ENCODE measurements at regions of chr1 and their contacts with region 1.

Region 1: DNA sequence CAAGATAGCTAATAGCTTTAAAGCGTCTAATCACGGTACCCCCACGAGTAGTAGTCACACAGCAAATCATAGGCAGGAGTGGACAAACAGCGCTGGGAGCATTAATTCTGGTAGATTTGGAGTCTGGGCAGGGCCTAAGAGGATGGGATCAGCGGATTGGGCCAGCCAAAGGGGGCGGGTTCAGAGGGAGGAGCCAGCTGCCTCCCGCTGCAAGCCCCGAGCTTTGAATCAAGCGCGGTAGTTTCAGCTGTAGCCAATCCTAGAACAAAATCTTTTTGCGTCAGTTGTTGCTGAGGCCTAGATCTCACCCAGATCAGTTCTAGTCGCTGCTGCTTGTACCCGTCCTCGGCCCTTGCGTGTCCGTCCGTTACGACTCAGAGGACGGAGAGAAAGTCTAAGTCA is 576 bp upstream of the NASP start:
- DNase-seq: peak; percentile 96
- H3K4me3 Mint-ChIP-seq: peak overlapping the region; percentile 99
- H3K27ac Mint-ChIP-seq: peak overlapping the region; percentile 98
- H3K4me1 Mint-ChIP-seq: peaks cover 25% of the 10 kb centered on the region
- H3K27me3 Mint-ChIP-seq: no peaks in the 10 kb centered on the region

Region 2: GRCh38 chr1:45303582-45304310 is 279.5 kb before region 1 on chr1:
- CTCF ChIA-PET with region 1: interaction called, 3 read pairs
- POLR2A ChIA-PET with region 1: no interaction called
- intact Hi-C with region 1: loop called (anchors 1 kb)
- DNase-seq: peak; percentile 100
- H3K4me3 Mint-ChIP-seq: peak overlapping the region; percentile 89
- H3K27ac Mint-ChIP-seq: peak overlapping the region; percentile 96
- H3K4me1 Mint-ChIP-seq: peaks cover 29% of the 10 kb centered on the region
- H3K27me3 Mint-ChIP-seq: no peaks in the 10 kb centered on the region

Region 3: DNA sequence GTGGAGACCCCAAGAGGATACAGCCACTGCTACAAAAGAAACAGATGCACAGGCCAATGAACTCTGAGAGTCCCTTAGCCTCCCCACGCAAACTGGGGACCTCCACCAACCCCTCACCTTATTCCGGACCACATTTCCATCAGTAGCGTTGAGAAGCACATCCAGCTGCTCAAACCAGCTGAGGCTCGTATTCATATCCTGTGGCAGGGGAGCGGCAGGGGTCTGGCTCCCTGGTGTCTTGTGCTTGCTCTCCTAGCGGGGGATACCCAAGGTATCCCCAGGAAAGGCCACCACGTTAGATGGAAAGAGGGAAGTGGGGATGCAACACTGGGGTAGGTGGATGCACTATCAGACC is 83.9 kb before region 1 on chr1:
- CTCF ChIA-PET with region 1: interaction called, 5 read pairs
- POLR2A ChIA-PET with region 1: interaction called, 8 read pairs
- intact Hi-C with region 1: loop called (anchors 1 kb)
- DNase-seq: peak; percentile 39
- H3K4me3 Mint-ChIP-seq: peak overlapping the region; percentile 95
- H3K27ac Mint-ChIP-seq: peak overlapping the region; percentile 83
- H3K4me1 Mint-ChIP-seq: peaks cover 30% of the 10 kb centered on the region
- H3K27me3 Mint-ChIP-seq: no peaks in the 10 kb centered on the region

Region 4: GRCh38 chr1:45543581-45544417 is 39.5 kb before region 1 on chr1:
- CTCF ChIA-PET with region 1: no interaction called
- POLR2A ChIA-PET with region 1: interaction called, 3 read pairs
- intact Hi-C with region 1: loop called (anchors 5 kb)
- DNase-seq: peak; percentile 87
- H3K4me3 Mint-ChIP-seq: peak overlapping the region; percentile 10
- H3K27ac Mint-ChIP-seq: peak overlapping the region; percentile 60
- H3K4me1 Mint-ChIP-seq: peaks cover 26% of the 10 kb centered on the region
- H3K27me3 Mint-ChIP-seq: no peaks in the 10 kb centered on the region

Region 5: DNA sequence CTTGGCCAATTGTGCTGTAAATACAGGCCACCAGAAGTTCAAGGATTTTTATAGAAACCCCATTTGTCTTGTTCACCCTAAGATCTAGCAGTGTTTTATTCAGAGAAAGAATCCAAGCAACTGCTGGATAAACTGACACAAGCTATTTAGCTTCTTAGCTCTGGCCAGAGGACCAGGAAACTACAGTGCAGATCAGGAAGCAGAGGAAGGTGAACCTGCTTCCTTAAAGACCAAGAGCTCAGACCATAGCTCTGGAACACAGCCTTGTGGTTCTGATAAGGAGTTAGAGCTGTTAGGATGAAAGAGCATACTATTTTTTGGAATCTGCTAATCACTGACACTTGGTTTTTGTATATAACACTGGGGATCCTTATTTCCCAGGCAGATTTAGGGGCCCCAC is 45.8 kb after region 1 on chr1:
- CTCF ChIA-PET with region 1: no interaction called
- POLR2A ChIA-PET with region 1: no interaction called
- intact Hi-C with region 1: no loop called
- DNase-seq: no peak
- H3K4me3 Mint-ChIP-seq: no peak overlapping the region
- H3K27ac Mint-ChIP-seq: no peak overlapping the region
- H3K4me1 Mint-ChIP-seq: no peaks in the 10 kb centered on the region
- H3K27me3 Mint-ChIP-seq: no peaks in the 10 kb centered on the region

Region 6: GRCh38 chr1:45686317-45687013 is 103.2 kb after region 1 on chr1 and contains the start of gene GPBP1L1:
- CTCF ChIA-PET with region 1: no interaction called
- POLR2A ChIA-PET with region 1: interaction called, 16 read pairs
- intact Hi-C with region 1: loop called (anchors 1 kb)
- DNase-seq: peak; percentile 99
- H3K4me3 Mint-ChIP-seq: peak within 1 kb of the TSS; percentile 99
- H3K27ac Mint-ChIP-seq: peak within 1 kb of the TSS; percentile 99
- H3K4me1 Mint-ChIP-seq: peaks cover 50% of the 10 kb centered on the region
- H3K27me3 Mint-ChIP-seq: no peaks in the 10 kb centered on the region
- total RNA-seq, gene GPBP1L1: 106 TPM

Region 7: DNA sequence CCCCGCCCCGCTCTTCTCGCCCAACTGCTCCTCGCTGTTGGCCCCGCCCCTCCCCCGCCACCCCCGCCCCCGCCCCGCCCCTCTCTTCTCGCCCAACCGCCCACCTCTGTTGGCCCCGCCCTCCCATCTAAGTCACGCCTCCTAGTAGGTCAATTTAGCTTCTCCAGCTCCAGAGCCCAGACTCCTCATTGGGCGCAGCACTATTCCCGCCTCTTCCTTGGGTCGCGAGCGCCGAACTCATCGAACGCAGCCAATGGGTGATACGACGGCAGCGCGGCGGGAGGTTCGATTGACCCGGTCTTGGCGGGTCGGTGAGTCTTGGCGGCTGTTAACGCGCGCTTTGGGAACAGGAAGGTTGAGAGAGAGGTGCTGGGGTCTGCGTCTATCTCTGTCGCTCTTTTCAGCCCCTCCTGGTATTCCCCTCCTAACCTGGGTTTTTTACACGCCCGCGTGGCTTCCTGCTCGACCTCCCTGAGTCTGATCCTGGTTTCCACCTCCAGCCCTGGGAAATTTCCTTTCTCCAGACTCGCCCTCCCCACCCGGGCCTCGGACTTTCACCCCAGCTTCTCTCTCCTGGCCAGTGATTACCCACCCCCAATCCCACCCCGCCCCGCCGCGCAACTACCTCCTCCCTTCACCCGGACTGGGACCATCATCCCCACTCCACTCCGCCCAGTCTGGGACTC is 664.3 kb after region 1 on chr1 and contains the start of gene RAD54L:
- CTCF ChIA-PET with region 1: no interaction called
- POLR2A ChIA-PET with region 1: no interaction called
- intact Hi-C with region 1: loop called (anchors 1 kb)
- DNase-seq: peak; percentile 99
- H3K4me3 Mint-ChIP-seq: peak within 1 kb of the TSS; percentile 99
- H3K27ac Mint-ChIP-seq: peak within 1 kb of the TSS; percentile 91
- H3K4me1 Mint-ChIP-seq: peaks cover 26% of the 10 kb centered on the region
- H3K27me3 Mint-ChIP-seq: no peaks in the 10 kb centered on the region
- total RNA-seq, gene RAD54L: 64.9 to 65.0 TPM